Activated CD8-positive, alpha-beta T cell treated with anti-CD3 and anti-CD28 coated beads for 36 hours (primary cell): ENCODE measurements at regions of chr4 and their contacts with region 1.

Region 1: DNA sequence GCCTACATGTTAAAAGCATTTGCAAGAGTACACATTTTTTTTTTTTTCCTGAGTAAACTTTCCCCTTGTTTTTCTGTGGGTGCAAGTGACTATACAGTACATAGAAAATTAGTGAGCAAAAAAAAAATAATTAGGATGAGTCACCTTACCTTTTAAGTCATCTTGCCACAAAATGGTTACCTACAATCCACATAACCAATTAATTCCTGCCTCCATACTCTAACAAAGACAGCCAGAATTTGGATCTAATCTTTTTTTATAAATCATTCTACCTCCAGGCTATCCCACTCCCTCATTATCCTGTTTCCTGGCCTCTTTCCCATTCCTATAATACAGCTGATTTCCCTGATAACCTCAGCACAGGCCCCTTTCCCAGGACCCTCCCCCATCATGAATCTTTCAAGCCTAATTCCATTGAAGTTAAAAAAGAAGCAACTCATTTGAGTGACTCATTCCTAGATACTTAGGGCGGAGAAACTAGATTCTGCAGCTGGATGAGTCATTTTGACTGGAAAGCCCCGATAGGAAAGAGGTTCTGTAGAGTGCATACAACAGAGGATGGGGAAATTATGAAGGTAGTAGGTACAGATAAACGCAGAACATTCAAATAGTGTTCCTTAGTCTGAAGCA is 128.2 kb downstream of the C4orf51 start:
- DNase-seq: peak; percentile 73
- ATAC-seq: peak; percentile 85
- H3K4me3 Mint-ChIP-seq: peak overlapping the region; percentile 42
- H3K27ac Mint-ChIP-seq: peak overlapping the region; percentile 99
- H3K4me1 Mint-ChIP-seq: peaks cover 64% of the 10 kb centered on the region
- H3K27me3 Mint-ChIP-seq: no peaks in the 10 kb centered on the region
- CTCF ChIP-seq: no peak

Region 2: DNA sequence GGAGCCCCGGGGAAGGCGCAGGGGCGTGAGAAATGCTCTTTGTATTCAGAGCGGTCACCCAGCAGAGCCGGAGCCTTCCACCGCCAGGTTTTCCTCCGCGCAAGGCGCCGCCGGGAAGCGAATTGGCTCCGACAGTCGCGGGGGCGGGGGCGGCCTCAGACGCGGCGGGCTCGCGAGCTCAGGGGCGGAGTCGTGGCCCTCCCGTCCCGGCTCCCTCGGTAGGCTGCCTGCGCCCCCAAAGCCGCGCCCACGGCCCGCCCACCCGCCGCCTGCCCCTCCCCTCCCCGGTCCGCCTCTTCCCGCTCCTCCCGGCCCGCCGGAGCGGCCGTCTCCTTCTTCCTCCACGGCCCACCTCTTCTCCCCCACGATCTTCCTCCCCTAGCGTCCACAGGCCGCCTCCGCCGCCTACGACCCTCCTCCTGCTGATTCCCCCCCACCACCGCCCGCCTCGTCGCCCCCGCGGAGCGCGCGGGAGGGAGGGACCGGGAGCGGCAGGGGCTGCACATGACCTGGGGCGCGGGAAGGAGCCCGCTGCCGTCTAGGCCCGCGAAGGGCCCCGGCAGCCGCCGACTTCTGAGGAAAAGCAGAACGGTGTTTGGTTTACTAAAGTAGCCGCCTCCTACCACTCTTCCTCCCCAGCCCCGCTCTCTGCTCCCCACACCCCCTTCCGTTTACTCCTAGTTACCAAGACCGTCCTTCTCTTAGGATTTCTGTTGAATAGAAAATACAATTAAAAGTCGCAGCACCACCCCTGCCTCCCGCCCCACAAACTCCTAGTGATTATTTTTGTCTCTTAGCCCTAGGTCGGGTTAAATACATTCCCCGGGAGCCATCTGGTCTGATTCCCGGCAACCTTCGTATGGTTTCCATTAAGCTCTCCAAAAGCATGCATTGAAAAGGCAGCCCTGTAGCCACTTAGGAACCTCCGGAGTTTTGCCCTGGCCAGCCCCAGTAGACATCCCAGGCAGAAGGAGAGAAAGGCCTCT is 74.9 kb before region 1 on chr4:
- CTCF ChIA-PET with region 1: no interaction called
- POLR2A ChIA-PET with region 1: no interaction called
- intact Hi-C with region 1: loop called (anchors 5 kb)
- DNase-seq: peak; percentile 89
- ATAC-seq: peak; percentile 96
- H3K4me3 Mint-ChIP-seq: peak overlapping the region; percentile 69
- H3K27ac Mint-ChIP-seq: peak overlapping the region; percentile 49
- H3K4me1 Mint-ChIP-seq: peaks cover 17% of the 10 kb centered on the region
- H3K27me3 Mint-ChIP-seq: peaks cover 12% of the 10 kb centered on the region
- CTCF ChIP-seq: no peak

Region 3: DNA sequence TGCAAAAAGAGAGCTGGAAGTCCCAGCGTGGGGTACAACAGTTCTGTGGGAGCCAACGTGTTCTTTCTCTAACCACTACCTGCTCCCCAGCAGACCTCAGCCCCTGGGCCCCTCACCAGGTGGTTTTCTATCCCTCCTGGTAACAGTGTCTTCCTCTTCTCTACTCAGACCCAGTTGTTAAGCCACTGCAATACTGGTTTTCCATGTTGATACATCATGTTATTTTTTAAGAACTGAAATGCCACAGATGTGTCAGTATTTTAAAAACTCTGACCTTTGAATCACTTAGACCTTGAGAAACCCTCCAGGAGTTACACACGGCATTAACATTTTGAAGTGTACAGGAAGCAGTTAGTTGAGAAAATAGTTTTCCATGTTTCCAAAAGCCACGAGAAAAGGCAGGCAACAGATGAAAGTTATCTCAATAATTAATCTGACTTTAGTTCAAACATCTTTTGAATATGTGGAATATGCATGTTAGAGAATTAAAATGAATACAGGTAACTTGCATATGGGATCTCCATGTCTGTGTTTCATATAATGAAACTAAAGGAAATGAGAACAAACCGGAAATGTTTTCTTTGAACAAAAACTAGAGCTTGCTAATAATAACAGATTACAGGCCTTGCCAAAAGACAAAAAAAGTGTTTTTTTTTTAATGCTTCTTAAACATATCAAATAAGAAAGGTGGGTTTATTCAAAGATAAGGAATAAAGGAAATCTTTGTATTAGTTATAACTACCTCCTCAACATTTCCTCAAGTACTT is 21.7 kb after region 1 on chr4:
- CTCF ChIA-PET with region 1: interaction called, 3 read pairs
- POLR2A ChIA-PET with region 1: interaction called, 6 read pairs
- intact Hi-C with region 1: loop called (anchors 1 kb)
- DNase-seq: peak; percentile 73
- ATAC-seq: peak; percentile 71
- H3K4me3 Mint-ChIP-seq: peak overlapping the region; percentile 60
- H3K27ac Mint-ChIP-seq: peak overlapping the region; percentile 92
- H3K4me1 Mint-ChIP-seq: peaks cover 56% of the 10 kb centered on the region
- H3K27me3 Mint-ChIP-seq: no peaks in the 10 kb centered on the region
- CTCF ChIP-seq: no peak

Region 4: GRCh38 chr4:145881989-145882388 is 73.9 kb after region 1 on chr4:
- CTCF ChIA-PET with region 1: no interaction called
- POLR2A ChIA-PET with region 1: no interaction called
- intact Hi-C with region 1: no loop called
- DNase-seq: peak; percentile 9
- ATAC-seq: no peak
- H3K4me3 Mint-ChIP-seq: no peak overlapping the region
- H3K27ac Mint-ChIP-seq: no peak overlapping the region
- H3K4me1 Mint-ChIP-seq: peaks cover 46% of the 10 kb centered on the region
- H3K27me3 Mint-ChIP-seq: no peaks in the 10 kb centered on the region
- CTCF ChIP-seq: no peak

Region 5: GRCh38 chr4:145936142-145936996 is 128.2 kb after region 1 on chr4:
- CTCF ChIA-PET with region 1: no interaction called
- POLR2A ChIA-PET with region 1: interaction called, 4 read pairs
- intact Hi-C with region 1: loop called (anchors 10 kb)
- DNase-seq: peak; percentile 78
- ATAC-seq: peak; percentile 45
- H3K4me3 Mint-ChIP-seq: peak overlapping the region; percentile 96
- H3K27ac Mint-ChIP-seq: peak overlapping the region; percentile 97
- H3K4me1 Mint-ChIP-seq: peaks cover 48% of the 10 kb centered on the region
- H3K27me3 Mint-ChIP-seq: no peaks in the 10 kb centered on the region
- CTCF ChIP-seq: peak; percentile 48